ENCODE measurements at regions of chr10 and their contacts with region 1.

Region 1: GRCh38 chr10:416091-416515 is 273.4 kb downstream of the DIP2C start:
- DNase-seq: peak; percentile 41
- ATAC-seq: peak; percentile 92
- H3K4me3 Mint-ChIP-seq: no peak overlapping the region
- H3K27ac Mint-ChIP-seq: no peak overlapping the region
- H3K4me1 Mint-ChIP-seq: peaks cover 4% of the 10 kb centered on the region
- H3K27me3 Mint-ChIP-seq: no peaks in the 10 kb centered on the region
- CTCF ChIP-seq: no peak

Region 2: GRCh38 chr10:396535-397220 is 19.4 kb before region 1 on chr10:
- CTCF ChIA-PET with region 1: interaction called, 12 read pairs
- POLR2A ChIA-PET with region 1: no interaction called
- DNase-seq: no peak
- ATAC-seq: no peak
- H3K4me3 Mint-ChIP-seq: no peak overlapping the region
- H3K27ac Mint-ChIP-seq: no peak overlapping the region
- H3K4me1 Mint-ChIP-seq: peaks cover 22% of the 10 kb centered on the region
- H3K27me3 Mint-ChIP-seq: no peaks in the 10 kb centered on the region
- CTCF ChIP-seq: no peak

Region 3: GRCh38 chr10:443253-443858 is 27.3 kb after region 1 on chr10:
- CTCF ChIA-PET with region 1: no interaction called
- POLR2A ChIA-PET with region 1: no interaction called
- DNase-seq: no peak
- ATAC-seq: no peak
- H3K4me3 Mint-ChIP-seq: no peak overlapping the region
- H3K27ac Mint-ChIP-seq: no peak overlapping the region
- H3K4me1 Mint-ChIP-seq: no peaks in the 10 kb centered on the region
- H3K27me3 Mint-ChIP-seq: no peaks in the 10 kb centered on the region
- CTCF ChIP-seq: no peak

Region 4: DNA sequence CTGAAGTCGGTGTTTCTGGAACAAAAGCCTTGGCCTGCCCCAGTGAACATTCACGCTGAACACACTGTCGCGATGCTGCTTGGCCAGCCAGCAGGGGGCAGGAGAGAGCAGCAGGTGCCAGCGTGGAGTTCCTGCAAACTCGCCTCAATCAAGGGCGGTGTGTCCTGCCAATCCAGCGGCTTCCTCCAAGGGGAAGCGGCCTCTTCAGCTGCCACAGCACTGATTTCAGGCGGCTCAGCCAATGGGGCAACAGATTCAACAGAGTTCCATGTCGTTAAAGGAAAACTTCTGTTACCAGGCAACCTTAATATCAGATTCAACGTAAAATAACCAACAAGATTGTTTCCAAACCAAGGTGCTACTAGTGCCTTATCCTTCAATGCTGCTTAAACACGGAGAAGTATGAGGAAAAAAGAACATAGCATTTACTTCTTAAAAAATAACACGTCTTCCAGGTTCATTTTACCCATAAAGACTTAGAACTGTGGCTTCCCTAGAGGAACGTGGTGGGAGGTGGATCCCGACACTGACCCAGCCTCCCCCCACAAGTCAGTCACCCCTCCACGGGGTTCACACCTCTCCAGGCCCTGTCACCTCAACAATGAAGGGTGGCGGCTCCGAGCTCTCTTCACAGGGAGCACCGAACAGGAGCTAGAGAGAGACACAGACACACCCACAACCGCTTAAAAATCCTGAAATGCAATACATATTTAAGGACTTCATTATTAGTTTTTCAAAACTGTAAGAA is 95.2 kb after region 1 on chr10:
- CTCF ChIA-PET with region 1: interaction called, 13 read pairs
- POLR2A ChIA-PET with region 1: no interaction called
- DNase-seq: peak; percentile 95
- ATAC-seq: peak; percentile 95
- H3K4me3 Mint-ChIP-seq: no peak overlapping the region
- H3K27ac Mint-ChIP-seq: no peak overlapping the region
- H3K4me1 Mint-ChIP-seq: peaks cover 9% of the 10 kb centered on the region
- H3K27me3 Mint-ChIP-seq: peaks cover 48% of the 10 kb centered on the region
- CTCF ChIP-seq: peak; percentile 87

Measured in WTC11 (cell line).